Transverse colon (tissue), 4 donors: ENCODE measurements at regions of chr17 and their contacts with region 1.

Region 1: DNA sequence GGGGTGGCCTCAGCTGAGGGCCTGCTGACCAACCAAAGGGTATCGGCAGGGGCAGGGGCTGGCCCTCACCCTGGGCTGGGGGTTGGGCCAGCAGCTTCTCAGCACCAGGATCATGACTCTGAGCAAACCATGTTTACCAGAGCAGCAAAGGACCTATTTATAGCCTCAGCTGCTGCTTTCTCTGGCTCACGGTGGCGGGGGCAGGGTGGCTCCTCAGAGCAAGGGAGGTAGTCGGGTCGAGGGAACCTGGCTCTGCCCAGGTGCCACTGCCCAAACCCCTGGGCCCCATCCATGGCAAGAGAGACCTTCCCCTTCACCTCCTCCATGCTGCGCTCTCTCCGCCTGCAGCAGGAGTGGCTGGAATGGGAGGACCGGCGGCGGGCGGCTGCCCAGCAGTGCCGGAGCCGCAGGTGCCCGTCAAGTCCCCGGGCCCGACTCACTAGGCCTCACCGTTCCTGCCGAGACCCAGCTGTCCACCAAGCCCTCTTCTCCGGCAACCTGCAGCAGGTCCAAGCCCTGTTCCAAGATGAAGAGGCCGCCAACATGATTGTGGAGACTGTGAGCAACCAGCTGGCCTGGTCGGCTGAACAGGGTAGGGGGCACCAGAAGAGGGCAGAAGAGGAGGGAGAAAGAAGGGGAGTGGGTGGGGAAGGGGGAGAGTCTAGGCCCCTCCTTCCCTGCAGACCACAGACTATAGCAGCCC is at the start of gene ASB16:
- DNase-seq: no peak
- H3K4me3 ChIP-seq: peak within 1 kb of the TSS in 1 of 4 donors; percentile 30
- H3K27ac ChIP-seq: peak within 1 kb of the TSS; percentile 40 to 81 (median 48)
- H3K4me1 ChIP-seq: peaks cover 0 to 11% (median 7%) of the 10 kb centered on the region in 4 donors
- H3K27me3 ChIP-seq: no peaks in the 10 kb centered on the region
- CTCF ChIP-seq: no peak
- EP300 ChIP-seq: no peak
- POLR2A ChIP-seq: no peak
- total RNA-seq, gene ASB16: 1.2 to 2.6 TPM in 2 of 4 donors, not detected in the others

Region 2: GRCh38 chr17:44070455-44071197 is 100.0 kb before region 1 on chr17 and contains the start of gene G6PC3:
- in situ Hi-C with region 1: loop called in 1 of 4 experiments (anchors 25 kb)
- intact Hi-C with region 1: no loop called
- DNase-seq: peak; percentile 96
- H3K4me3 ChIP-seq: peak within 1 kb of the TSS; percentile 36 to 87 (median 62)
- H3K27ac ChIP-seq: peak within 1 kb of the TSS; percentile 91 to 96 (median 91)
- H3K4me1 ChIP-seq: peaks cover 14 to 36% (median 25%) of the 10 kb centered on the region in 4 donors
- H3K27me3 ChIP-seq: no peaks in the 10 kb centered on the region
- CTCF ChIP-seq: peak in 2 of 5 experiments; percentile 8 to 22
- EP300 ChIP-seq: no peak
- POLR2A ChIP-seq: peak; percentile 75
- total RNA-seq, gene G6PC3: 5.2 to 35.6 (median 18.5) TPM

Region 3: DNA sequence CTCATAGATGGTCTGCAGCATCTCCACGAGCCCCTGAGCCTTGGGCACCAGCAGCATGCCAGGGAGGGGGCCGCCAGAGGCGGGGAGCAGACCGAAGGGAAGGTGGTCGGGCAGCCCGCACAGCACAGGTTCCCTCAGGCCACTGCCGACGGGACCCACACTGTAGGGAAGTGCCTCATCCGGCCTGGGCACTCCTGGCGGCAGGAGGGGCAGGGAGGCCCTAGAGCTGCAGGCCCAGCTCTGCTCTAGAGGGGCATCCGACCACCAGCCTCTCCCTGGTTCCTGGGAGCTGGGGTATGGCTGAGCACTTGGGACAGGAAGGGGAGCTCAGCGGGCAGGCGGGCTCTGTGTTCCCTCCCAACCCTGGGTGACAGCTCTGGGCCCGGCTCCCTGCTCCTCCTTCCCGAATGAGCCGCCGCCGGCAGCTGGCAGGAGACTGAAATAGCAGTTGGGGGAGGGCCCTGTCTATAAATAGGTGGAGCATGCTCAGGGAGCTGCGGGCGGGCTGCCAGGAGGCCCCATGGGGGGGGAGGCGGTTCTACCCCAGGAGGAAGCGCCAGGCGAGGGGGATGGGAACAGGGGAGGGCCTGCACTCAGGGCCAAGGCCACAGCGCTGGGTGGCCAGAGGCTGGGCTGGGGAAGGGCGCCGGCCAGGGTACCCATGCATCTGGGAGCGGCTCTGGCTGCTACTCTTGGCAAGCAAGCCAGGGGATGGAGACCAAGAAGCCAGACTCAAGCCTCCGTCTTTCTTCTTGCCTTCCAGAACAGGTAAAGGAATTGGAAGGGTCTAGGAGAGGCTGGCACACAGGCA is 59.6 kb before region 1 on chr17:
- in situ Hi-C with region 1: no loop called
- intact Hi-C with region 1: no loop called
- DNase-seq: peak; percentile 97
- H3K4me3 ChIP-seq: peak overlapping the region; percentile 7 to 39 (median 20)
- H3K27ac ChIP-seq: peak overlapping the region; percentile 77 to 94 (median 87)
- H3K4me1 ChIP-seq: peaks cover 46 to 66% (median 50%) of the 10 kb centered on the region in 4 donors
- H3K27me3 ChIP-seq: no peaks in the 10 kb centered on the region
- CTCF ChIP-seq: no peak
- EP300 ChIP-seq: peak; percentile 10
- POLR2A ChIP-seq: peak; percentile 37

Region 4: DNA sequence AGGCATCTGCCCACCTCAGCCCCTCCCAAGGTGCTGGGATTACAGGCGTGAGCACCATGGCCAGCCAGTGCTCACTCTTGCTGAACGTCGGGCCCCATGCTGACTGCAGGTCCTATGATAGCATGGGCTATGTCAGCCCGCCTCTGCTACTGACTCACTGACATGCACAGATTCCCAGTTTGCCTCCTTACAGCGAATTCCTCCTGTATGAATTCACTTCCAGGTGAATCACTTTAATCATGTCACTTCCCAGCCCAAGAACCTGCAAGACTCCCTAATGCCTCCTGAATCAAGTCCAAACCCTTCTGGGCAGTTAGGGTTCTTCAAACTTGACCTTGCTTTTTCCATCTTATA is 64.9 kb after region 1 on chr17:
- in situ Hi-C with region 1: no loop called
- intact Hi-C with region 1: no loop called
- DNase-seq: no peak
- H3K4me3 ChIP-seq: no peak overlapping the region
- H3K27ac ChIP-seq: no peak overlapping the region
- H3K4me1 ChIP-seq: no peaks in the 10 kb centered on the region
- H3K27me3 ChIP-seq: peaks cover 4% of the 10 kb centered on the region
- CTCF ChIP-seq: no peak
- EP300 ChIP-seq: no peak
- POLR2A ChIP-seq: no peak